PC-9 (cell line): ENCODE measurements at regions of chr3 and their contacts with region 1.

Region 1: GRCh38 chr3:124688581-124689454 is 41.4 kb upstream of the UMPS start:
- DNase-seq: peak; percentile 57 to 81
- H3K4me3 ChIP-seq: no peak overlapping the region
- H3K27ac ChIP-seq: no peak overlapping the region
- H3K4me1 ChIP-seq: no peaks in the 10 kb centered on the region
- H3K27me3 ChIP-seq: peaks cover 5% of the 10 kb centered on the region; the same call in 1 of the 2 replicates
- CTCF ChIP-seq: peak; percentile 89

Region 2: DNA sequence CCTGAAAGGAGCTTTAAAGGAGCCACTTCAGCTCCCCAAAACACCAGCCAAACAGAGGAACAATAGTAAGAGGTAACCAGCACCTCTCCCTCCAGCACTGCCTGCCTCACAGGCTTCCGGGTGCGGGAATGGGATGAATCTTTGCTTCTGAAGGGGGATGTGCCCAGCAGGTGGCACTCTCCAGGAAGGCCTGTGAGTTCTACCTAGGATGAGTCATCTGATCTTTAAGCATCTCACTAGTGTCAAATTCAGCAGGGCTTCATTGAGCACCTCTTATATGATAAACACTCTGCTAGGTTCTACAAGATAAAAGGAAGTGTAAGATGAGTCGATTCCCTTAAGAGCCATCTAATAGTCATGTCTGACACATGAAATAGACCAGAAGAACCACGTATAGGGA is 196.0 kb before region 1 on chr3:
- CTCF ChIA-PET with region 1: no interaction called
- POLR2A ChIA-PET with region 1: no interaction called
- intact Hi-C with region 1: loop called (anchors 5 kb)
- DNase-seq: peak; percentile 51 to 55
- H3K4me3 ChIP-seq: no peak overlapping the region
- H3K27ac ChIP-seq: no peak overlapping the region
- H3K4me1 ChIP-seq: no peaks in the 10 kb centered on the region
- H3K27me3 ChIP-seq: peaks cover 36% of the 10 kb centered on the region
- CTCF ChIP-seq: peak; percentile 67

Region 3: DNA sequence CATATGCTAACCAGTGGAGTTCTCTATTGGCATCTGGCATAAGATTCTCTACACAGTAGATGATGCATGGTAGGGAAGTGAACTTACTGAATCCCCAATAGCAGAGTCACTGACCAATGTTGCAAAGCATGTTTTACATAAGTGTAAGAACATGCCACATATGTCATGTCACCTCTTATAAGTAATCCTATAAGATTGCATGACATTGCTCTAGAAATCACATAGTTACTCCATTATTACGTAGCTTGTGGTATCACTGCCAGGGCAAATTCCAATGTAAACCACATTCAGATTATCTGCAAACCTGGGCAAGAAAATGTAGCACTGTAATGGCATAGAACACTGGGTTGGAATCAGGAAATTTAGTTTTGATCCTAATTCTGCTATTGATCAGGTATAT is 156.7 kb before region 1 on chr3:
- CTCF ChIA-PET with region 1: no interaction called
- POLR2A ChIA-PET with region 1: no interaction called
- intact Hi-C with region 1: no loop called
- DNase-seq: no peak
- H3K4me3 ChIP-seq: no peak overlapping the region
- H3K27ac ChIP-seq: no peak overlapping the region
- H3K4me1 ChIP-seq: no peaks in the 10 kb centered on the region
- H3K27me3 ChIP-seq: peaks cover 76% of the 10 kb centered on the region
- CTCF ChIP-seq: no peak

Region 4: GRCh38 chr3:124620600-124621063 is 68.2 kb before region 1 on chr3:
- CTCF ChIA-PET with region 1: interaction called, 6 read pairs
- POLR2A ChIA-PET with region 1: no interaction called
- intact Hi-C with region 1: loop called (anchors 1 kb)
- DNase-seq: peak; percentile 44 to 65
- H3K4me3 ChIP-seq: no peak overlapping the region
- H3K27ac ChIP-seq: no peak overlapping the region
- H3K4me1 ChIP-seq: peaks cover 12% of the 10 kb centered on the region
- H3K27me3 ChIP-seq: no peaks in the 10 kb centered on the region
- CTCF ChIP-seq: no peak

Region 5: DNA sequence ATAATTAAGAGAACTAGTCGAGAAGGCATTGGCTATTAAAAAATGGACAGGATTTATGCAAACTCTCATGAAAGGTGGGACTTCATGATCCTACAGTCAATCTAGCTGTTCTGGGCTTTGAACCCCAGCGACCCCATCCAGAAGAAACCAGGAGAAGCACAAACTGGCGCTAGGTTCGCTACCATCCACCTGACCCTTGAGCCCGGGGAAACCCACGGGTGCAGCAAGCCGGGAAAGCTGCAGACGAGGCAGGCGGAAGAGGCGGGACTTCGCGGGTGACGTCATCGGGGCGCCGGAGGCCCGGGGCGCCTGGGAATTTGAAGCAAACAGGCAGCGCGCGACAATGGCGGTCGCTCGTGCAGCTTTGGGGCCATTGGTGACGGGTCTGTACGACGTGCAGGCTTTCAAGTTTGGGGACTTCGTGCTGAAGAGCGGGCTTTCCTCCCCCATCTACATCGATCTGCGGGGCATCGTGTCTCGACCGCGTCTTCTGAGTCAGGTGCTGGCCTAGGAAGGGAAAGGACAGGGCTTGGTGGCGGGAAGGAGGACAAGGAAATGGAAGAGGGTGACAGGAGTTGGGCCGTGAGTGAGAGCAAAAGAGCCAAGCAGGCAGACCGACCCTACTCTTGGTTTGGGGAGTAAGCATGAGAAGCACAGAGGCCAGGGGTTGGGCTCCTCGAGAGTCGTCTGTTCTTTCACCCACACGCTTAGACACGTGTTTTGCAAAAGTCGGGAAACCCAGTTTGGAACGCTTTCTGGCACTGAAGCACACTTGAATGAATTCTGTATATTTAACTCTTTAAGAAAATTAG is 41.5 kb after region 1 on chr3 and contains the start of gene UMPS:
- CTCF ChIA-PET with region 1: no interaction called
- POLR2A ChIA-PET with region 1: interaction called, 13 read pairs
- intact Hi-C with region 1: no loop called
- DNase-seq: peak; percentile 62 to 87
- H3K4me3 ChIP-seq: peak within 1 kb of the TSS; percentile 70
- H3K27ac ChIP-seq: peak within 1 kb of the TSS; percentile 26; the same call in 1 of the 2 replicates
- H3K4me1 ChIP-seq: peaks cover 22% of the 10 kb centered on the region
- H3K27me3 ChIP-seq: no peaks in the 10 kb centered on the region
- CTCF ChIP-seq: no peak
- total RNA-seq, gene UMPS: 35.6 and 61.8 TPM in 2 replicates

Region 6: DNA sequence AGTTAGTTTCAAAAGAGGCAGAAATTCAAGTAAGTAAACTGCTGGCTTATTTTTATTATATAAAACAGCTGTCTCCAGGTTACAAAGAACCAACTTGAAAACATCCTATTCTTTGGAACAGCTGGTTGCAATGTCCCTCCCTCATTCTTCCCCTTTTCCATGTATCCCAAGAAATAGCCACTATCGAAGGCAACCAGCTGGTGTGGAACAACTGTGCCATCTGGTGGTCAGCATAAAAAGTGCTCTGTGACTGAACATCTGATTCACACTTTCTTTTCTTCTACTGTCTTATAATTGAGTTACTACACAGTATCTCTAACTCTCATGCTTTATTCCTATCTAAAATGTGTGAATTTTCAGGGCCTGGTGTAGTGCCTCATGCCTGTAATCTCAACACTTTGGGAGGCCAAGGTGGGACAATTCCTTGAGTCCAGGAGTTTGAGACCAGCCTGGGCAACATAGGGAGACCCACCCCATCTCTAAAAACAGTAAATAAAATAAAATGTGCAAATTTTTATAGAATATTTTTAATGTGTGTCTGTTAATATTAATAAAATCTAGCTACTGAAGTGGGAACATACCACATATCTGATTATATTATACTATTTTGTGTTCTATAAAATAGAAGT is 896.9 kb after region 1 on chr3:
- CTCF ChIA-PET with region 1: no interaction called
- POLR2A ChIA-PET with region 1: no interaction called
- intact Hi-C with region 1: loop called (anchors 5 kb)
- DNase-seq: peak; percentile 55 to 56
- H3K4me3 ChIP-seq: no peak overlapping the region
- H3K27ac ChIP-seq: no peak overlapping the region
- H3K4me1 ChIP-seq: no peaks in the 10 kb centered on the region
- H3K27me3 ChIP-seq: no peaks in the 10 kb centered on the region
- CTCF ChIP-seq: peak; percentile 84